ENCODE measurements at regions of chr15 and their contacts with region 1.

Region 1: DNA sequence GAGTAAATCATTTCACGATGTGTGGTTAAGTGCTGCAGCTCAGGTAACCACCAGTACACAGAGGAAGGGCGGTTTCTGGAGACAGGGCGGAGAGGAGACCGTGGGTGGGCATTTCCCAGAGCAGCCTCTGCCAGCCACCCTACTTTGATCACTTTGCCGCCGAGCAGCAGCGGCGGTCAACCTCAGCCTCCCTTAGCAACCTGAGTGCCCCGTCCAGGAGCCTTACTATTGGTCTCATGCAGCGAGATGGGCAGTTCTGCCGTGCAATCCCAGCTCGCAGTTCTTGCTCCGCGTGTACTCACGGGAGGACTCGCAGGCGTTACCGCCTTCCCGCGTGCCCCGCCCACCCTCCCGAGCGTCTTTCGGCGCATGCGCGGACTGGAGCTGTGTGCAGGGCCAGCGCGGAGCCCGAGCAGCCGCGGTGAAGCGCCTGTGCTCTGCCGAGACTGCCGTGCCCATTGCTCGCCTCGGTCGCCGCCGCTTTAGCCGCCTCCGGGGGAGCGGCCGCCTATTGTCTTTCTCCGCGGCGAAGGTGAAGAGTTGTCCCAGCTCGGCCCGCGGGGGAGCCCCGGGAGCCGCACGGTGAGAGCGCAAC is at the start of gene AKAP13:
- DNase-seq: peak; percentile 94 to 97
- H3K4me3 ChIP-seq: peak within 1 kb of the TSS; percentile 66
- H3K27ac ChIP-seq: peak within 1 kb of the TSS; percentile 82
- H3K4me1 ChIP-seq: peaks cover 32% of the 10 kb centered on the region
- H3K27me3 ChIP-seq: no peaks in the 10 kb centered on the region
- CTCF ChIP-seq: no peak
- total RNA-seq, gene AKAP13: 78.3 and 82.5 TPM in 2 replicates

Region 2: DNA sequence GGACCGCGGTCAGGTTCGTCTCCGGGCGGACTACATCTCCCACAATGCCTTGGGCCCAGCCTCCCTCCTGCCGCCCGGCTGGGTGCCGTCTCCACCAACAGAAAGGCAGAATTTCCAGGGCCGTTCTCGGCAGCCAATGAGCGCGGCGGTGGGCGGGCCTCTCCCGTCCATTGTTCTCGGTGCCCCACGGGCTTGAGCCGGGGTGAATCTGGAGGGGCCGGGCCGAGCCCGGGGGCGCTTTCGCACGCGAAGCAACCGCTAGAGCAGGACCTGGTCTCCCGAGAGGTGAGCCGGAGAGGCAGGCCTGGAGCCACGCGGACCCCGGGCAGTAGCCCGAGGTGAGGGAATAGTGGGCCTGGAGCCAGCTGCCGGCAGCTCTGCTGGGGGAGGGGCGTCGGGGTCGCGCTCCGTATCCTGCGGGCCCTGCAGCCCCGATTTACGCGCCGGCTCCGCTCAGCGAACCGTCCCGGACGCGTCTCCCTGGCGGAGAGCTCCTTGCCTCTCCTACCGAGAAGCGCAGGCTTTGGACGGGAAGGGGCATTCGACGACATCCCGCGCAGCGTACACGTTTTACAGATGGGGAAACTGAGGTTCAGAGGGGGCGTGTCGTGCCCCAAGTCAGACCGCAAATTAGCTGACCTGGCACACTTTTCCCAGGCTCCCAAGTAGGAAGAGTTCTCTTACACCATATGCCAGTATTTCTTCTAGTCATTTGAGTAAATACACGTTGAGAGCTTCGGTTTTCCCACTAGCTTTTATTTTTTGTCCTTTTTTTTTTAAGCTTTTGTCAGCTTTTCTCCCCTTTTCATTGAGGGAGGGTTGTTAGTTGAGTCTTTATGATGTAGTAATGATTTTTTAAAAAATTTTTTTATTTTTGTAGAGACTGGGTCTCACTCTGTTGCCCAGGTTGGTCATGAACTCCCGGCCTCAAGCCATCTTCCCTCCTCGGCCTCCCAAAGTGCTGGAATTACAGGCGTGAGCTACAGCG is 779.2 kb before region 1 on chr15 and contains the start of gene ZSCAN2:
- CTCF ChIA-PET with region 1: no interaction called
- POLR2A ChIA-PET with region 1: no interaction called
- intact Hi-C with region 1: no loop called
- DNase-seq: peak; percentile 87 to 94
- H3K4me3 ChIP-seq: peak within 1 kb of the TSS; percentile 88
- H3K27ac ChIP-seq: peak within 1 kb of the TSS; percentile 24; the same call in 1 of the 2 replicates
- H3K4me1 ChIP-seq: peaks cover 6% of the 10 kb centered on the region
- H3K27me3 ChIP-seq: no peaks in the 10 kb centered on the region
- CTCF ChIP-seq: no peak
- total RNA-seq, gene ZSCAN2: 9.7 and 11.3 TPM in 2 replicates

Region 3: DNA sequence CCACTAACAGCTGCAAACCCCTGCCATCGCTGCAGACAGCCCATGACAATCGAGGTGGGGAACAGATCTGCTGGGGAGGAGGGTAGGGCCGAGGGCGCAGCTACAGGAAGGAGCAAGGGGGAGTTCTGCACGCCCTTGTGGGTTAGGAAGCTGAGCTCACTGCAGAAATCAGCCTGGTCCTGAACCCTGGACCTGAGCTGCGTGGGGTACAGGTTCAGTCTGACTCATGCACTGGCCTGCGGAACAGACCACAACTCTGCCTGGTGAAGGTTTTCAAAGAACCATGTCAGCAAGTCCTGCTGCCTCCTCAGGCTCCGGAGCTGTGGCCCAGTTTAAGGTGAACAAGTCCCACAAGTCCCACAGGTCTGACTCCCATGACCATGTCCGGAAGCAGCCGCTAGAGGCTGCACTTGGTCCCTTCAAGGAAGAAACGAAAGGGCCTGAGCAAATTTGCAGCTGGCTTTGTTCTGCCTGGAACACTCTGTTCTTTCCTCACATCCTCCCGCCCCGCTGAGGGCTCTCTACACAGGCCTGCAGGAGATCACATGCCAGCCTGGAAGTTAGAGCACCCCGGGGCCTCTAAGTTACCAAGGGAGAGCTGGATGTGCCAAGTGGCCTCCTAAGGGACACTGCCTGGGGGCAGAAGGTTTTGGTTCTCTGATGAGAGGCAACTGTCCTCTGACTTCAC is 49.3 kb before region 1 on chr15:
- CTCF ChIA-PET with region 1: interaction called, 3 read pairs
- POLR2A ChIA-PET with region 1: no interaction called
- intact Hi-C with region 1: loop called (anchors 1 kb)
- DNase-seq: peak; percentile 78
- H3K4me3 ChIP-seq: no peak overlapping the region
- H3K27ac ChIP-seq: no peak overlapping the region
- H3K4me1 ChIP-seq: peaks cover 13% of the 10 kb centered on the region
- H3K27me3 ChIP-seq: no peaks in the 10 kb centered on the region
- CTCF ChIP-seq: peak; percentile 83

Region 4: DNA sequence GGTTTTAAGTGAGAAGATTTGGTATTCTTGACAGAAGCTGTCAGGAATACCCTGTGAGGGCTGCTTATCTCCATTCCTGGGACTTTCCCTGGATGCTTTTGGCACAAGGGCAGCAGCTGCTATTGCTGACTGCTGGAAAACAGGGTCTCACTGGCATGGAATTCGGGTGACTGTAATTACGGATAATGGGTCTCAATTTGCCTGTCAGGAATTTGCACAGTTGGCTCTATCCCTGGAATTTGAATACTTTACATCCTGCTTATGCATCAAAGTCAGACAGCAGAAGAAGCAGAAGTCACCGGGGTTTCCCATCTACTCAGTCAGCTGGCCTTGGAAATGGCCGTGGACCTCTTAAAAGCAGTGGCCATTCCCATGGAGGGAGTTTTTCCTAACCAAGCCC is 25.9 kb before region 1 on chr15:
- CTCF ChIA-PET with region 1: no interaction called
- POLR2A ChIA-PET with region 1: interaction called, 30 read pairs
- intact Hi-C with region 1: loop called (anchors 2 kb)
- DNase-seq: no peak
- H3K4me3 ChIP-seq: no peak overlapping the region
- H3K27ac ChIP-seq: no peak overlapping the region
- H3K4me1 ChIP-seq: peaks cover 41% of the 10 kb centered on the region
- H3K27me3 ChIP-seq: no peaks in the 10 kb centered on the region
- CTCF ChIP-seq: no peak

Region 5: GRCh38 chr15:85362436-85363081 is 17.8 kb before region 1 on chr15:
- CTCF ChIA-PET with region 1: interaction called, 3 read pairs
- POLR2A ChIA-PET with region 1: interaction called, 11 read pairs
- intact Hi-C with region 1: loop called (anchors 2 kb)
- DNase-seq: no peak
- H3K4me3 ChIP-seq: no peak overlapping the region
- H3K27ac ChIP-seq: no peak overlapping the region
- H3K4me1 ChIP-seq: peaks cover 20% of the 10 kb centered on the region
- H3K27me3 ChIP-seq: no peaks in the 10 kb centered on the region
- CTCF ChIP-seq: no peak

Region 6: GRCh38 chr15:85394552-85395333 is 14.4 kb after region 1 on chr15:
- CTCF ChIA-PET with region 1: no interaction called
- POLR2A ChIA-PET with region 1: interaction called, 14 read pairs
- intact Hi-C with region 1: no loop called
- DNase-seq: peak in 1 of 2 experiments; percentile 41
- H3K4me3 ChIP-seq: no peak overlapping the region
- H3K27ac ChIP-seq: peak overlapping the region; percentile 58
- H3K4me1 ChIP-seq: peaks cover 32% of the 10 kb centered on the region
- H3K27me3 ChIP-seq: no peaks in the 10 kb centered on the region
- CTCF ChIP-seq: no peak

Region 7: DNA sequence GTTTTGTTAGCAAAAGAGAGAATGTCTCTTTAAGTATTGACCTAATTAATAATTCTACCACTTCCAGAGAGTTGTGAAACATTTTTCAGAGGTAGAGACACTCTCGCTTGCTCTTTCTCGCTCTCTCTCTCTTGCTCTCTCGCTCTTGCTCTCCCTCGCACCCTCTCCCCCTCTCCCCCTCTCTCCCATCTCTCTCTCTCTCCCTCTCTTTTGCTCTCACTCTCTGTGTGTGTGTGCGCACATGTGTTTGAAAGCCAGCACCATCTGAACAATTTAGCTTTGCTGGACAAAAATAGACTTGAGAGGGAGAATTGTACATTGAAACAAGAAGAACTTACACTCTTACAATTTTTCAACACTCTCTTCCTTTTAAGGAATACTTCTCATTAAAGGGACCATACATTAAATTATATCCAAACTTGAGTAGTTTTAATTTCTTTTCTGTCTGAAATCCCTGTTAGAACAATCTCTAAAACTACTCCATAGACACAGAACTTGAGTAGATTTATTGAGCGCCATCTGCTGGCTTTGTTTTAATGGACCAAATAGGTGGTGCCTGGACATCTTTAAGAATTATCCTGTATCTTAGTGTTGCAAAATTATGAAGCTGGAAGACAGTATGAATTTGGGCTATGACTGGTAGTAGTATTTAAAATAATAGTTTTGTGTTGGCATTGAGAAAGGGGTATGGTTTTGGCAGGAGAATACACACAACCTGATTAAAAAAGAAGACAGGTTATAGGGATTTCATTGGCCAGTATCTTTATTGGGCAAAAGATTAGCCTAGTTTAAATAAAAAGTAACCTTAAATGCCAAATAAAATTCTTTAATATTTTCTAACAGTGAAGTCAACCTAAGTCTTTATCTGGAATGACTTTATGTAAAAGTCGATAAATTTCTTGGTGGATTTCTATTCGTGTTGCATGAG is 124.7 kb after region 1 on chr15:
- CTCF ChIA-PET with region 1: no interaction called
- POLR2A ChIA-PET with region 1: interaction called, 14 read pairs
- intact Hi-C with region 1: no loop called
- DNase-seq: peak; percentile 11 to 38
- H3K4me3 ChIP-seq: no peak overlapping the region
- H3K27ac ChIP-seq: no peak overlapping the region
- H3K4me1 ChIP-seq: no peaks in the 10 kb centered on the region
- H3K27me3 ChIP-seq: no peaks in the 10 kb centered on the region
- CTCF ChIP-seq: peak; percentile 70

Region 8: GRCh38 chr15:85527895-85528294 is 147.6 kb after region 1 on chr15:
- CTCF ChIA-PET with region 1: interaction called, 10 read pairs
- POLR2A ChIA-PET with region 1: no interaction called
- intact Hi-C with region 1: no loop called
- DNase-seq: no peak
- H3K4me3 ChIP-seq: no peak overlapping the region
- H3K27ac ChIP-seq: no peak overlapping the region
- H3K4me1 ChIP-seq: no peaks in the 10 kb centered on the region
- H3K27me3 ChIP-seq: no peaks in the 10 kb centered on the region
- CTCF ChIP-seq: no peak

Measured in PC-9 (cell line).